Activated T-helper 2 cell treated with anti-CD3 and anti-CD28 coated beads, Interferon-gamma antibody, Interleukin-2, Interleukin-4, amounts not matched to agents 10 μg/mL and 5 μg/mL and 100 μg/mL, durations not matched to agents 14 hours and 24 hours and 36 hours (primary cell): ENCODE measurements at regions of chr12 and their contacts with region 1.

Region 1: GRCh38 chr12:74021937-74022336 is 515.7 kb upstream of the ATXN7L3B start:
- DNase-seq: no peak
- H3K4me3 Mint-ChIP-seq: no peak overlapping the region
- H3K27ac Mint-ChIP-seq: no peak overlapping the region
- H3K4me1 Mint-ChIP-seq: no peaks in the 10 kb centered on the region
- H3K27me3 Mint-ChIP-seq: no peaks in the 10 kb centered on the region

Region 2: DNA sequence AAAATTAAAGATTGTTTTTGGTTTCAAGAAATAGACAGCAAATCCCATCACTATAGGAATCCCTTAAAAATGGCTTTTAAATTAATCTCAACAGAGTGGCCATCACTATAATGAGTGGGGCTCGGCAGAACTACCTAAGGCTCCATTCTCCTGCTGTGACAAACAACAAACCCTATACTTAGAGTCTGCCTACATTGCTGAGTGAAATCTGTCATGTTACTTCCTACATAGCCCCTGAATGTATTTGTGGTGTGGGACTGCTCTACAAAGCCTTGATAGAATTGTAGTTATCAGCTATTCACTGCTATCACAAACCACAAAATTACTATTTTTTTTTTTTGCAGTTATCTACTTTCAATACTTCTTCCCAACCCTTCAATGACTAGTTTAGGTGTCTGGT is 23.0 kb before region 1 on chr12:
- intact Hi-C with region 1: no loop called
- DNase-seq: no peak
- H3K4me3 Mint-ChIP-seq: no peak overlapping the region
- H3K27ac Mint-ChIP-seq: no peak overlapping the region
- H3K4me1 Mint-ChIP-seq: no peaks in the 10 kb centered on the region
- H3K27me3 Mint-ChIP-seq: no peaks in the 10 kb centered on the region

Region 3: DNA sequence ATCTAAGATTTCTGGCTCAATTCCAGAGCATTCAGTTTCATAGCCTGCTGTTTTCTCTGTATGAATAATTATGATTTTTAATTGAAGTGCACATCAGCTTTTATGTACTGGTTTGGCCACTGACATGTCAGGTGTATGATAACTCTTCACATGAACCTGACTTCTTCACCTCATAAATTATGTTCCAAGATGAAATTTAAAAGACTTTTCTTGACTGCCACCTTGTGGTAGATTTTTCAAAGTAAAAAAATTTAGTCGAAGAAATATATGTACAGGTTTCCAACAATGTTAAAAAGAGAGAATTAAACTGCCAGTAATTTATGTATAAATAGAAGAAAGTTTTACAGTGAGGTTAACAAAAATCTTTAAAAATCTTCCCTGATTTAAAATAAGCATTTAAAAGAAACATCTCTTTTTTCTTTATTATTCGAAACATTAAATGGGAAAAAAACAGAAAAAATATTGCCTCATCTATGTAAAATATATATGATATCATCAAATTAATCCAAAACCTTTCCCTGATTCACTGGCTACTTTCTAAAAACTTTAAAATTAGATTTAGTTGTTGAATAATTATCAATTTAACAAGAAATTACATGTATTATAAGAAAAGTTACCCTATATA is 390.8 kb after region 1 on chr12:
- intact Hi-C with region 1: loop called (anchors 5 kb)
- DNase-seq: no peak
- H3K4me3 Mint-ChIP-seq: no peak overlapping the region
- H3K27ac Mint-ChIP-seq: no peak overlapping the region
- H3K4me1 Mint-ChIP-seq: no peaks in the 10 kb centered on the region
- H3K27me3 Mint-ChIP-seq: peaks cover 1% of the 10 kb centered on the region